ENCODE measurements at regions of chr5 and their contacts with region 1.

Region 1: DNA sequence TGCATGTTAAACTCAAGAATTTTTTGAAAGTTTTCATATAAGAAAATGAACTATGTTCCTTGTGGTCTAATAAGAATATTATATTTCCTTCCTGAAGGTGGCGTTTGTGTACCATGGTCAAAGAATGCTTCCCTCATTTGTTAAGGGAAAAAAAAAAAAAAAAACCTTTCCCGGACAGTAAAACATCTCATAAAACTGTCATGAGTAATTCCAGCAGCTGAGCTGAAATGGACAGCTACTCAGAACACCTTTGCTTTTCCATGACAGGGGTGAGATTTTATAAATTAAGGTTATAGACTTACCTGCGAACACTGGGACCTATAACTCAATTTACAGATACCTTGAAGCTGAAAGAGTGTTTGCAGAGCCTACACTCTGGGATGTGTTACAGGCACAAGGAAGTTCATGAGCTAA is 113.2 kb upstream of the RANBP3L start:
- DNase-seq: no peak

Region 2: GRCh38 chr5:36378551-36378950 is 36.3 kb before region 1 on chr5:
- intact Hi-C with region 1: no loop called
- DNase-seq: no peak

Region 3: DNA sequence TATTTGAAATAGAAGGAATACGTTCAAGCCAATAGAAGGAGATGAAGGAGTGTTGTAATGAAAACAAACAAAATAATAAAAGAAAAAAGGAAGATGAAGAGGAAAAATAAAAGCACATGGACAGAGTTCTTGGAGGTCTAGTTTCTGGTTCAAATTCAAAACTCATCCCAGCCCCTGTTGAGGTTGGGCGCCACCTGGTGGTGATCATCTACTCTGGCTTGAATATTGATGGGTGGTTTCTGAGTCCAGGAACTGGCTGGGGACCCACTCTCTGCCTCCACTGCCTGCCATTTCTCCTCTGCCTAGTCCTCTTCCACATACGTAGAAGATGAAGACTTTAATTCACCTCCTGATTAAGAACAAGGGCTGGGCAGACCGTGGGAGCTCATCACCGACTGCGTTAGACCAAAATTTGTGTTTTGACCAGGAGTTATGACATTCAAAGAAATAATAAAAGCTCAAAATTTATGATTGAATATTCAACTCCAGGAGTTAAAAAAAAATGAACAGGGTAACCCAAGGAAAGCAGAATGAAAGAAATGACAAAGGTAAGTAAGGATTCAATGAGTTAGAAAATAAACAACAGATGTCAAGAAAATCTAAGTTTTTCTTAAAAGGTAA is 92.6 kb after region 1 on chr5:
- intact Hi-C with region 1: loop called (anchors 1 kb)
- DNase-seq: peak in 8 of 10 donors; percentile 42 to 92 (median 78)

Region 4: GRCh38 chr5:36611520-36612274 is 196.8 kb after region 1 on chr5:
- intact Hi-C with region 1: loop called (anchors 10 kb)
- DNase-seq: no peak